CD4-positive, alpha-beta T cell (primary cell): ENCODE measurements at regions of chr18 and their contacts with region 1.

Region 1: GRCh38 chr18:9348079-9348681 is 13.6 kb downstream of the TWSG1 start:
- DNase-seq: no peak
- ATAC-seq: no peak
- H3K4me3 ChIP-seq: no peak overlapping the region
- H3K4me3 Mint-ChIP-seq: no peak overlapping the region
- H3K27ac ChIP-seq: no peak overlapping the region
- H3K27ac Mint-ChIP-seq: no peak overlapping the region
- H3K4me1 ChIP-seq: no peaks in the 10 kb centered on the region
- H3K4me1 Mint-ChIP-seq: peaks cover 5% of the 10 kb centered on the region
- H3K27me3 ChIP-seq: no peaks in the 10 kb centered on the region
- H3K27me3 Mint-ChIP-seq: no peaks in the 10 kb centered on the region
- CTCF ChIP-seq: no peak

Region 2: GRCh38 chr18:9321017-9321452 is 27.1 kb before region 1 on chr18:
- CTCF ChIA-PET with region 1: no interaction called
- POLR2A ChIA-PET with region 1: no interaction called
- intact Hi-C with region 1: loop called in 1 of 2 experiments (anchors 2 kb)
- DNase-seq: no peak
- ATAC-seq: no peak
- H3K4me3 ChIP-seq: no peak overlapping the region
- H3K4me3 Mint-ChIP-seq: no peak overlapping the region
- H3K27ac ChIP-seq: no peak overlapping the region
- H3K27ac Mint-ChIP-seq: no peak overlapping the region
- H3K4me1 ChIP-seq: no peaks in the 10 kb centered on the region
- H3K4me1 Mint-ChIP-seq: no peaks in the 10 kb centered on the region
- H3K27me3 ChIP-seq: peaks cover 0 to 16% of the 10 kb centered on the region in 2 experiments
- H3K27me3 Mint-ChIP-seq: peaks cover 24% of the 10 kb centered on the region
- CTCF ChIP-seq: no peak